AG04450 (cell line): ENCODE measurements at regions of chr10 and their contacts with region 1.

Region 1: GRCh38 chr10:35563261-35563891 is 41.8 kb upstream of the GJD4 start:
- DNase-seq: peak; percentile 44
- H3K4me3 ChIP-seq: no peak overlapping the region
- H3K27ac ChIP-seq: no peak overlapping the region
- H3K27me3 ChIP-seq: no peaks in the 10 kb centered on the region
- CTCF ChIP-seq: peak; percentile 100

Region 2: DNA sequence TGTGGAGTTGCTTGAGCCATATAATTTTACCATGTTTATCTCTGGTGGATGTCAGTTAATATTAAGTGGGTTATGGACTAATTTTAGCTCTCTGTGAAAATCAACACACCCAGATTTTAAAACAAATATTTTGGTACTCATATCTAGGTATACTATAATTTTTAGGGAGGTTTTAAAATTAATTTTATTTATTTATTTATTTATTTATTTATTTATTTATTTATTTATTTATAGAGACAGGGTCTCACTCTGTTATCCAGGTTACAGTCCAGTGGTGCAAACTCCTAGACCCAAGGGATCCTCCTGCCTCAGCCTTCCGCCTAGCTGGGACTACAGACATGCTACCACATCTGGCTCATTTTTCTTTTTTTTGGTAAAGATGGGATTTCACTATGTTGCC is 444.0 kb before region 1 on chr10:
- CTCF ChIA-PET with region 1: interaction called, 15 read pairs
- POLR2A ChIA-PET with region 1: no interaction called
- DNase-seq: no peak
- H3K4me3 ChIP-seq: no peak overlapping the region
- H3K27ac ChIP-seq: no peak overlapping the region
- H3K27me3 ChIP-seq: no peaks in the 10 kb centered on the region
- CTCF ChIP-seq: no peak

Region 3: DNA sequence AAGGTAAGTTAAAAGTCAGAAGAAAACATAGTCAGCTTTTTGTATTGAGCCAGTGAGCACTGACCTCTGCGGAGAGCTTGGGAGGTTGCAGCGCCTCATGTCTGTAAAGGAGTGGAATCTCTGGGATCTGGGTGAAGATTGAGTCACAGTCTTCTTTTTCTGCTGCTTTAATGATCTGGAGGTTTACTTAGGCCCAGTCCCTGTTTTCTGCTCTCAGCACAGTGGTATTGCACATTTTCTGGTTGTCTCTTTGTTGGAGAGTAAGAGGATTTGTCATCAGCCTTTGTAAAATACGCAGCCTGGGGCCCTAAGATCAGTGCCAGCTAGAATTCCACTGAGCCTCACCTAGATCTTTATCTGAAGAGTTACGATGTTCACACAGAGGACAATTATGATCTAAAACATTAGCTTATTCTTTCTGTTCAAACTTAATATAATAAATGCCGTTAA is 16.5 kb before region 1 on chr10:
- CTCF ChIA-PET with region 1: interaction called, 23 read pairs
- POLR2A ChIA-PET with region 1: no interaction called
- DNase-seq: no peak
- H3K4me3 ChIP-seq: no peak overlapping the region
- H3K27ac ChIP-seq: no peak overlapping the region
- H3K27me3 ChIP-seq: no peaks in the 10 kb centered on the region
- CTCF ChIP-seq: 0 out of 2 replicates have a peak, but pooled peaks have one; percentile 17

Region 4: DNA sequence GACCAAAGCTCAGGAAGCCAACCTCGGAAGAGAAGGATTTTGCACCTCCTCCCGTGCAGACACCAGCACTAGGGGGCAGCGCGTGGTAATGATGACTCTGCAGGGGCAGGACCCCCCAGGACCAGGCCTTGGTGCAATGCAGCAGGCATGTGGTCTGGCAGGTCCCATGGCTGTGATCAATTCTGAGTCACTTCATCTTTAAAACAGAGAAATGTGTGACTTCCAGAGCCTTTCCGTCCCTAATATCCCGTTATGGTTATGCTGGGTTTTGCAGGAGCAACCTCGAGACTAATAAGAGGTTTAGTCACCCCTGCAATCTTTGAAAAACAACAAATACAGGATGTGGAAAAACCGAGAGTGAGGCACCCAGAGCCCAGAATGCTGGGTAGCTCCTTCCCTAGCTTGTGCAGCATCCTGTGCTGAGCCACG is 11.6 kb after region 1 on chr10:
- CTCF ChIA-PET with region 1: interaction called, 39 read pairs
- POLR2A ChIA-PET with region 1: interaction called, 3 read pairs
- DNase-seq: peak; percentile 56
- H3K4me3 ChIP-seq: no peak overlapping the region
- H3K27ac ChIP-seq: peak overlapping the region; percentile 74
- H3K27me3 ChIP-seq: no peaks in the 10 kb centered on the region
- CTCF ChIP-seq: peak; percentile 56

Region 5: GRCh38 chr10:35752469-35753450 is 189.4 kb after region 1 on chr10:
- CTCF ChIA-PET with region 1: no interaction called
- POLR2A ChIA-PET with region 1: no interaction called
- DNase-seq: no peak
- H3K4me3 ChIP-seq: no peak overlapping the region
- H3K27ac ChIP-seq: no peak overlapping the region
- H3K27me3 ChIP-seq: no peaks in the 10 kb centered on the region
- CTCF ChIP-seq: no peak

Region 6: DNA sequence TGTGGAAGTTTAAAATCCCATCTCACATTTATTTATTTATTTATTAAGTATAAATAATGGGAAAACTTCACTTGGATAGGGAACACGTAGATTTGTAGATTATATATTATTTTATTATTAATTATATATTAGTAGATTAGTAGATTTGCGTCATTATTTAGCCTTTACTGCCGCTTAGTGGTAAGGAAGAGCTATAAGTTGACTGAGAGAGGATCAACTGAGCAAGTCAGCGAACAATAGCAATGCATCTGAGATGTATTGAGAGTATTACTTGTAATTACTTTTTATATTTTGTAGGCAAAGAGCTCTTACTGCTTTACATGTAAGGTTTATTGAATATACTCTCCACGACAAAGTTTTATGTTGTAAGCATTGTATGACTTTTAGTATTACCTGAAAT is 1317.5 kb after region 1 on chr10:
- CTCF ChIA-PET with region 1: interaction called, 33 read pairs
- POLR2A ChIA-PET with region 1: no interaction called
- DNase-seq: peak; percentile 8
- H3K4me3 ChIP-seq: no peak overlapping the region
- H3K27ac ChIP-seq: no peak overlapping the region
- H3K27me3 ChIP-seq: peaks cover 2% of the 10 kb centered on the region
- CTCF ChIP-seq: peak; percentile 78